ENCODE measurements at regions of chr5 and their contacts with region 1.

Region 1: DNA sequence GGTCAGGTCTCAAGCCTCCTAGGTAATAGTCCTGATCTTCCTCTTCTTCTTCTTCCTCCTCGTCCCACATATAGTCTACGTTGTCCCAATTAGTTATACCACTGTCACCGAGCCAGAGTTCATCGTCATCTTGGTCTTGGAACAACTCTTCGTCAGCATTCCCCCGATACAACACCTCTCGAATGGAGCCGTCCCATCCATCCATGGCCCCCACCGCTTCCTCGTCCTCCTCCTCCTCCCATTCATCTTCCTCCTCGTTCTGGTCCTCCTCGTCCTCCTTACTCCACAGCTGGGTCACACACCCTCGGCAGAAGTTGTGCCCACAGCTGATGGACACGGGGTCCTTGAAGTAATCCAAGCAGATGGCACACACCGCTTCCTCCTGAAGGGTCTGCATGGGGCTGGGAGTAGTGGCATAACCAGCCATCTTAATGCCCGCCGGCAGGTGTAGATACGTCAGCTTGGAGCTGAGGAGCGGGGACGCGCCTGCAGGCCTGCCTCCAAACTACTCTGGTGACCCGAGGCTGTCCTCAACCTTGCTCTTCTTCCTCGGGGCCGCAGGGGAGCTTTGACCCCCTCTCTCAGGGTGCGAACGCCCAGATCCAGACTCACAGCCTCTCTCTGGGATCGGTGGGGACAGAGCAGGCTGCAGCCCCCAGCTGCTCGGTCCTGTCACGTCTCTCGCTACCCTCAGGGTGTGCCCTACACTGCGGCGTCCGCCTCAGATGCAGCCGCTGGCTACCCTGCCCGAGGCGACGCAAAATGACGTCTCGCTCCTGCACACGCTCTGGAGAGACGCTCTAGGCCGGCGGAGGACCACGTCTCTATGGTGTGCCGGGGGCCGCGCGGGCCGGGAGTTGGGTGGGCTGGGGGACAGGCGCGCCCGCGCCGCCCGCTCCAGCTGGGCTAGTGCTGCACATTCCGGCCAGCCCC is at the start of gene TRIM52:
- DNase-seq: peak; percentile 94
- ATAC-seq: peak; percentile 79
- H3K4me3 ChIP-seq: peak within 1 kb of the TSS; percentile 87
- H3K27ac ChIP-seq: peak within 1 kb of the TSS; percentile 84
- H3K4me1 ChIP-seq: peaks cover 4% of the 10 kb centered on the region; the same call in 1 of the 2 replicates
- H3K27me3 ChIP-seq: no peaks in the 10 kb centered on the region
- CTCF ChIP-seq: no peak
- total RNA-seq, gene TRIM52: 4.4 and 8.9 TPM in 2 replicates

Region 2: GRCh38 chr5:181037365-181037861 is 223.2 kb before region 1 on chr5:
- CTCF ChIA-PET with region 1: no interaction called
- POLR2A ChIA-PET with region 1: no interaction called
- intact Hi-C with region 1: no loop called
- DNase-seq: no peak
- ATAC-seq: no peak; the same call in 1 of the 2 replicates
- H3K4me3 ChIP-seq: no peak overlapping the region
- H3K27ac ChIP-seq: no peak overlapping the region
- H3K4me1 ChIP-seq: no peaks in the 10 kb centered on the region
- H3K27me3 ChIP-seq: peaks cover 27% of the 10 kb centered on the region
- CTCF ChIP-seq: no peak

Region 3: DNA sequence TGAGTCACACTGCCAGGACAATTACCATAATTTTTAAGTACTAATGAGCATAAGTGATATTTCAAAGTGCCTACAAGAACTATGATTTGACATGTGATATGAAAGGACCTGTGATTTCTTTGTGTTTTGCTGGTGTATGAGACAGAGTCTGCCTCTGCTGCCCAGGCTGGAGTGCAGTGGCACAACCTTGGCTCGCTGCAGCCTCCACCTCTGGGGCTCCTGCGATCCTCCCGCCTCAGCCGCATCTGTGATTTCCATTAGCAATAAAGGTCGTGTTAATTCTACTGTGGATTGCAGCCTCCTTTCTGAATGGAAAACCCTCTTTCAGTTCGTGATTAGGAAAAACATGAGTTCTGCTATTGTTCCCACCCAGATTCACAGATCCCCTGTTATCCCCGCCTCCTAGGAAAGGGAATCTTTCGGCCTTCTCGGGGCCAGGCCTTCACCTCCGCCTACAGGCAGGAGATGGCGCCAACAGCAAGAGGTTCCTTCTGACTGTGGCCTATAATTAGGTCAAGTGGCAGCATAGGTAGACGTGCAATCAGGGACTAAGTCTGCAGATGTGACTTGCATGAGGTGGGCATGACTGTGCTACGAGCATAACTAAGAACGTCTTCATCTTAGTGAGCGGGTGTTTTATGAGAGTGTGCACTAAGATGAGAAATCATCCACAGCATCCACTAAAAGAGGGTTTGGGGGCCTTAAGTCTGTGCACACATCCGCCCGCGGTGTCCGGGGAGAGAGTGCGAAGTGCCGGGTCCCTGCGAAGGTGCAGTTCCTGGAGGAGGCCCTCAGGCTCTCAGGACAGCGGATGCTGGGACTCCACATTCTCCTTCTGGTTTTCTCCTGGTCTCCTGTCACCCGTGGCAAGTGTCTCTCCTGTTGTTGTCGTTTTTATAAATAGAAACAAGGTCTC is 78.7 kb before region 1 on chr5:
- CTCF ChIA-PET with region 1: no interaction called
- POLR2A ChIA-PET with region 1: no interaction called
- intact Hi-C with region 1: loop called (anchors 5 kb)
- DNase-seq: peak; percentile 83
- ATAC-seq: peak; percentile 73
- H3K4me3 ChIP-seq: no peak overlapping the region
- H3K27ac ChIP-seq: no peak overlapping the region
- H3K4me1 ChIP-seq: peaks cover 12% of the 10 kb centered on the region
- H3K27me3 ChIP-seq: no peaks in the 10 kb centered on the region
- CTCF ChIP-seq: peak; percentile 89

Region 4: GRCh38 chr5:181243512-181244343 is 16.9 kb before region 1 on chr5 and contains the start of gene RACK1:
- CTCF ChIA-PET with region 1: interaction called, 11 read pairs
- POLR2A ChIA-PET with region 1: interaction called, 4 read pairs
- intact Hi-C with region 1: loop called (anchors 1 kb)
- DNase-seq: peak; percentile 78
- ATAC-seq: peak; percentile 48
- H3K4me3 ChIP-seq: peak within 1 kb of the TSS; percentile 99
- H3K27ac ChIP-seq: peak within 1 kb of the TSS; percentile 86
- H3K4me1 ChIP-seq: peaks cover 30% of the 10 kb centered on the region
- H3K27me3 ChIP-seq: no peaks in the 10 kb centered on the region
- CTCF ChIP-seq: no peak
- total RNA-seq, gene RACK1: 2,587 and 3,047 TPM in 2 replicates

Measured in PC-3 (cell line).